KBM-7 (cell line): ENCODE measurements at regions of chr14 and their contacts with region 1.

Region 1: GRCh38 chr14:22483863-22484593 is 105.0 kb downstream of the DAD1 start:
- DNase-seq: no peak

Region 2: DNA sequence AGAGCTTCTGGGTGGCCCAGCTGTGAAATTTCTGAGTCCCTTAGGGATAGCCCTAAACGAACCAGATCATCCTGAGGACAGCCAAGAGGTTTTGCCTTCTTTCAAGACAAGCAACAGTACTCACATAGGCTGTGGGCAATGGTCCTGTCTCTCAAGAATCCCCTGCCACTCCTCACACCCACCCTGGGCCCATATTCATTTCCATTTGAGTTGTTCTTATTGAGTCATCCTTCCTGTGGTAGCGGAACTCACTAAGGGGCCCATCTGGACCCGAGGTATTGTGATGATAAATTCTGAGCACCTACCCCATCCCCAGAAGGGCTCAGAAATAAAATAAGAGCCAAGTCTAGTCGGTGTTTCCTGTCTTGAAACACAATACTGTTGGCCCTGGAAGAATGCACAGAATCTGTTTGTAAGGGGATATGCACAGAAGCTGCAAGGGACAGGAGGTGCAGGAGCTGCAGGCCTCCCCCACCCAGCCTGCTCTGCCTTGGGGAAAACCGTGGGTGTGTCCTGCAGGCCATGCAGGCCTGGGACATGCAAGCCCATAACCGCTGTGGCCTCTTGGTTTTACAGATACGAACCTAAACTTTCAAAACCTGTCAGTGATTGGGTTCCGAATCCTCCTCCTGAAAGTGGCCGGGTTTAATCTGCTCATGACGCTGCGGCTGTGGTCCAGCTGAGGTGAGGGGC is 66.1 kb after region 1 on chr14:
- in situ Hi-C with region 1: loop called (anchors 10 kb)
- DNase-seq: peak; percentile 75

Region 3: GRCh38 chr14:22598900-22599253 is 114.8 kb after region 1 on chr14:
- in situ Hi-C with region 1: no loop called
- DNase-seq: no peak